ENCODE measurements at regions of chr2 and their contacts with region 1.

Region 1: GRCh38 chr2:169824373-169825333 is at the start of gene METTL5:
- DNase-seq: peak; percentile 89
- ATAC-seq: peak; percentile 72
- H3K4me3 Mint-ChIP-seq: peak within 1 kb of the TSS; percentile 83
- H3K27ac Mint-ChIP-seq: peak within 1 kb of the TSS; percentile 89
- H3K4me1 Mint-ChIP-seq: peaks cover 55% of the 10 kb centered on the region
- H3K27me3 Mint-ChIP-seq: no peaks in the 10 kb centered on the region
- total RNA-seq, gene METTL5: 129 to 165 TPM

Region 2: DNA sequence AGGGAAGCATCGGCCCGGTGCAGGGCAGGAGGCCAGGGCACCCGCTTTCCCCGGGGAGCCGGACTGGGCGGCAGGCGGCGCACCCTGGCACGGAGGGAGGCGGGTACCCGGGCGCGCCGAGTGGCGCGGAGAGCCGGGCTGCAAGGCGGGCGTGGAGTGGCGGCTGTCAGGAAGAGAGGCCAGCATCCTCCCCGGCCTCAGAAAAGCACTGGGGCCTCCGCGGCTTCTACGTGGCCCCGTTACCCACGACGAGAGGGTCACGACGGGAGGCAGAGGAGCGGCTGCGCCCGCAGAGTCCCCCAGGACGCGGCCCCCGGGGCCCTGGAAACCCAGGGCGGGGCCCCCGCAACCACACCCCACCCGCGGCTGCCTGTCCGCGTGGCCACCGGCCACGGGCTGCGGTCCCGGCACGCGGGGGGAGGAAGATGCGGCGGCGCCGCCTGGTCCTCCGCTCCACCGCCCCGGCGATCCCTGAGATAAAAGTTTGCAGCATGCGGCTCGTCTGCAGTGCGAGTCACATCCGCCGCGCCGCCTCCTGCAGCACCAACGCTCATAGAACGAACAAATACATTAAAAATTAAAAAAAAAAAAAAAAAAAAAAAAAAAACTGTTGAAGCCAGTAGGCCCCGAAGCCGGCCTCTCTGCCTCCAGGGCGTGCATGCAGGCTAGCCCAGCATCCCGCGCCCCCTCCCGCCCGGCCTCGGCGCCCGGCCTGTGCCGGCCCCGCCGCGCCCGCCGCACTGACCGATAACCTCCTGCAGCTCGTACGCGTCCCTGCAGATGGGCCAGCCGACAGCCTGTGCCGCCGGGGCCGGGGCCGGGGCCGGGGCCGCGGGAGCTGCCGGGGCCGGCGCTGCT is 1577.9 kb before region 1 on chr2:
- CTCF ChIA-PET with region 1: no interaction called
- POLR2A ChIA-PET with region 1: no interaction called
- intact Hi-C with region 1: loop called in 1 of 2 experiments (anchors 10 kb)
- DNase-seq: peak; percentile 85
- ATAC-seq: peak; percentile 47
- H3K4me3 Mint-ChIP-seq: peak overlapping the region; percentile 94
- H3K27ac Mint-ChIP-seq: peak overlapping the region; percentile 96
- H3K4me1 Mint-ChIP-seq: peaks cover 28% of the 10 kb centered on the region
- H3K27me3 Mint-ChIP-seq: no peaks in the 10 kb centered on the region

Region 3: DNA sequence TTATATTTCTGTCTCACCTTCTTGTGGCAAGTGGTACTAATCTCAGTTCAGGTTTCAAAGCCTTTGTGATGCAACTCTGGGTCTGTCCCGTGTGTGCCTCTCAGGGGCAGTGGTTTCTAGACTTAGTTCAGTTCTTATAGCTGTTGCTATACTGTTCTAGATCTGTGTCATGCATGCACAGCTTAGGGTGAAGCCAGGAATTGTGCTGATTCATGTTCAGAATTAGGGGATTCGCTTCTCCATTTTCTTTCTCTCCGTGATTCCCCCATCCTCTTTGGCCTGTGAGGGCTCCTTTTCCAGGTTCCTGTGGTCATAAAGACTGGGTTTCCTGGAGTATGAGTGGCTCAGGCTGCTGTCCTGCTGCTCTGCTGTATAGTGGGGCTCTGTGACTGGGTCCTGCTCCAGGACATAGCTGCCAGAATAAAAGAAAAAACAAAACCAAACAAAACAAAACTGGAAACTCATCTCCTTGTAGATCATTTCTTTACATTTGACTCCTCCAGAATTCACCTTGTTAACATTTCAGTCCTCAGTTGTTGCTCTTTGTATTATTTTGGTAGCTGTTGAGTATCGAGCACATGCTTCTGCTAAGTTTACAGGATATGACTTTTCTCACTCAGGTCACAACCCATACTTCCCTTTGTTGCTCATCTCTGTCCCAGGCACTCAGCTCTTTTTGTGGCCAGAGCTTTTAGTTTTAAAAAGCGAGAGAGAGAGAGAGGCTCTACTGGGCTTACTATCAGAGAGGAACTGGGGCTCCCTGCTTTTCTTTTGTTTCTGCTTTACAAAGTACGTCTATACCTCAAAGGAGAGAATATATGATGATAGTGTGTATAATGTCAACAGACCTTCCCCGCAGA is 1334.4 kb before region 1 on chr2:
- CTCF ChIA-PET with region 1: no interaction called
- POLR2A ChIA-PET with region 1: no interaction called
- intact Hi-C with region 1: no loop called
- DNase-seq: peak; percentile 78
- ATAC-seq: peak; percentile 92
- H3K4me3 Mint-ChIP-seq: peak overlapping the region; percentile 61
- H3K27ac Mint-ChIP-seq: peak overlapping the region; percentile 88
- H3K4me1 Mint-ChIP-seq: peaks cover 50% of the 10 kb centered on the region
- H3K27me3 Mint-ChIP-seq: peaks cover 7% of the 10 kb centered on the region

Region 4: DNA sequence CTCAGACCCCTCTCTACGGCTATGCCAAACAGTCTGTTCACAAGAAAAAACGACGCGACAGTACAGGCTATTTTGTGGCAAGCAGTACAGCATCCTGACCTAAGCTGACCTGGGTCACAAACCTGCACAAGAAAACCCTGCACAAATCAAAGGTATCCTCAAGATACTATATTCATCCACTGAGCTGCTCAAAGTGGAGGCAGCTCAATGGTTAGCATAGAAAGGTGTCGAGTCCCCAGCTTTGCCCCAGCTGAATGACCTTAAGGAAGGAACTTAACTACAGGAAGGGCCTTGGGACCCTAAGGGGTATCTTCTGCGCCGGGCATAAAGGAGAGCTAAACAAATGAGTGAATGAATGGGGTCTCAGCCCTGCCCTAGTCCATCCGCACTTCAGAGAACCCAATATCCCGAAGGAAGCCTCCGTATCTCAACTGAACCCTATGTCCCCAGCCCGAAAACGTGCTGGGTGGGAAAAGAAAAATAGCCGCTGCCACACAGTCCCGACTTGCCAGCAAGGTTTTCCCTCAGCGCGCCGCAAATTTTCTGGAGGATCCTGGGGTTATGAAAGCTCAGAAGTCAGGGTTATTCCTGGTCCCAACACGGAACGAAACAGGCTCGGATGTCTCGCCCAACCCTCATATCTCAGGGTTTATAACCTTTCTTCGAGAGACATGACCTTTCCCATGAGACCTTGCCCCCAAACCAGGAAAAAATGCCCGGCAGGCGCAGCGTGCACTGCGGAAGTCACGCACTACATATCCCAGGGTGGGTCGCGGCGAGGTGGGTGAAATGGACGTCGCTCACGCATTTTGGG is 251.3 kb before region 1 on chr2 and contains the start of gene FASTKD1:
- CTCF ChIA-PET with region 1: no interaction called
- POLR2A ChIA-PET with region 1: interaction called, 3 read pairs
- intact Hi-C with region 1: loop called (anchors 1 to 5 kb)
- DNase-seq: peak; percentile 94
- ATAC-seq: peak; percentile 100
- H3K4me3 Mint-ChIP-seq: peak within 1 kb of the TSS; percentile 97
- H3K27ac Mint-ChIP-seq: peak within 1 kb of the TSS; percentile 92
- H3K4me1 Mint-ChIP-seq: peaks cover 20% of the 10 kb centered on the region
- H3K27me3 Mint-ChIP-seq: no peaks in the 10 kb centered on the region
- total RNA-seq, gene FASTKD1: 29.8 to 39.7 TPM

Region 5: GRCh38 chr2:169798718-169799592 is 25.7 kb before region 1 on chr2 and contains the start of gene SSB:
- CTCF ChIA-PET with region 1: interaction called, 4 read pairs
- POLR2A ChIA-PET with region 1: interaction called, 12 read pairs
- intact Hi-C with region 1: loop called (anchors 1 kb)
- DNase-seq: peak; percentile 98
- ATAC-seq: peak; percentile 98
- H3K4me3 Mint-ChIP-seq: peak within 1 kb of the TSS; percentile 93
- H3K27ac Mint-ChIP-seq: peak within 1 kb of the TSS; percentile 91
- H3K4me1 Mint-ChIP-seq: peaks cover 22% of the 10 kb centered on the region
- H3K27me3 Mint-ChIP-seq: no peaks in the 10 kb centered on the region
- total RNA-seq, gene SSB: 127 to 138 TPM

Region 6: GRCh38 chr2:169928463-169928864 is 103.8 kb after region 1 on chr2:
- CTCF ChIA-PET with region 1: interaction called, 6 read pairs
- POLR2A ChIA-PET with region 1: no interaction called
- intact Hi-C with region 1: loop called in 1 of 2 experiments (anchors 1 kb)
- DNase-seq: no peak
- ATAC-seq: peak; percentile 36
- H3K4me3 Mint-ChIP-seq: no peak overlapping the region
- H3K27ac Mint-ChIP-seq: no peak overlapping the region
- H3K4me1 Mint-ChIP-seq: no peaks in the 10 kb centered on the region
- H3K27me3 Mint-ChIP-seq: no peaks in the 10 kb centered on the region

Region 7: GRCh38 chr2:169961911-169962310 is 137.3 kb after region 1 on chr2:
- CTCF ChIA-PET with region 1: no interaction called
- POLR2A ChIA-PET with region 1: no interaction called
- intact Hi-C with region 1: no loop called
- DNase-seq: no peak
- ATAC-seq: no peak
- H3K4me3 Mint-ChIP-seq: no peak overlapping the region
- H3K27ac Mint-ChIP-seq: no peak overlapping the region
- H3K4me1 Mint-ChIP-seq: no peaks in the 10 kb centered on the region
- H3K27me3 Mint-ChIP-seq: no peaks in the 10 kb centered on the region

Region 8: GRCh38 chr2:170715062-170715931 is 890.6 kb after region 1 on chr2 and contains the start of gene SP5:
- CTCF ChIA-PET with region 1: no interaction called
- POLR2A ChIA-PET with region 1: no interaction called
- intact Hi-C with region 1: loop called in 1 of 2 experiments (anchors 10 kb)
- DNase-seq: peak; percentile 48
- ATAC-seq: peak; percentile 52
- H3K4me3 Mint-ChIP-seq: peak within 1 kb of the TSS; percentile 70
- H3K27ac Mint-ChIP-seq: no peak within 1 kb of the TSS
- H3K4me1 Mint-ChIP-seq: peaks cover 26% of the 10 kb centered on the region
- H3K27me3 Mint-ChIP-seq: peaks cover 66% of the 10 kb centered on the region
- total RNA-seq, gene SP5: 0.37 TPM in 1 of 2 experiments, not detected in the other